GM10248 (cell line): ENCODE measurements at regions of chr6 and their contacts with region 1.

Region 1: DNA sequence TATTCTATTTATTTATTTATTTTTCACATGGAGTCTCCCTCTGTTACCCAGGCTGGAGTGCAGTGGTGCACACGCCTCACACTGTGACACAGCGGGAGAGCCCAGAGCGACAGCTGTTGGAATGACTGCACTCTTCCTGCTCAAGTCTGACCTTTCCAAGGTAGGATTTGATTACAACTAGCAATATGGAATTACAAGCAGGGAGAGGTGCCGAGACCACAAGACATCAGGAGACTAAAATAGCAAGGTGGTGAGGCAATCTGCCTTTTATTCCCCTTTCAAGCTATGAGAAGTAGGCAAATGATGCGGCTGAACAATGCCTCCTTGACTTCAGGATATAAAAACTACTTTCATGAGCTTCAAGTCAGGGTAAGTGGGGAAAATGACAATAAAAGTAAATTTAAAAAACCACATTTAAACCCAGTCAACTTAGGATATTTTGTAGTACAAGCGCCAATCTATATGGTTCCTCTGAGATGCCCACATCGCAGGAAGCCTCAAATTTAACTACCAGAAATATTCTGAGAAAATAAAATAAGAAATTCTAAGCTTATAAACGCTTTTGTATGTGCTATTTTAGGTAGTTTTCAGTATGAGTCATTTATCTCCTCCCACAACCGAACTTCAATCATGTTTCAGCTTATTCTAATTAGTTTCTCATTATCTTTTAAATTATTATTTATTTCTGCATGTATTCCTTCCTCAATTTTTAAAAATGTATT is 146.9 kb upstream of the SGK1 start:
- DNase-seq: peak; percentile 27
- CTCF ChIP-seq: no peak

Region 2: DNA sequence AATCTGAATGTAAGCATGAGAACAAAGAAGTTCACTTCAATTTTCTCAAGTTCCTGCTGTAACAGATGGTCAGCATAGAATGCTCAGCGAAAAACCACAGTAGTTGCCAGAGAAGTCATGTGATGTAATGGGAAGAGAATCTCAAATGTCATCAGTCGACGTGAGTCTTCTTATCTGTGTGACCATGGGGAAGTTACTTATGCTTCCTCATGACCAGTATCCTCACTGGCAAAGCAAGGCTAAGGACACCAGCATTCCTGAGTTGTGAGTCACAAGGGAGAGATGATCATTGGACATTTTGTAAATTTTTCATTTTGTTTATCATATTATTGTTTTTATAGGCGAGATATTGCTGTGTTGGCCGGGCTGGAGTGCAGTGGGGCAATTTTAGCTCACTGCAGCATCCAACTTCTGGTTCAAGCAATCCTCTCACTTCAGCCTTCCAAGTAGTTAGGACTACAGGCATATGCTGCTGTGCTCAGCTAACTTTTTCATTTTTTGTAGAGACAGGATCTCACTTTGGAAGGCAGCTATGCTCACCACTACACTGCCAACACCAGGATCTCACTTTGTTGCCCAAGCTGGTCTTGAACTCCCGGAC is 168.8 kb before region 1 on chr6:
- CTCF ChIA-PET with region 1: no interaction called
- POLR2A ChIA-PET with region 1: no interaction called
- DNase-seq: peak; percentile 54
- CTCF ChIP-seq: no peak

Region 3: DNA sequence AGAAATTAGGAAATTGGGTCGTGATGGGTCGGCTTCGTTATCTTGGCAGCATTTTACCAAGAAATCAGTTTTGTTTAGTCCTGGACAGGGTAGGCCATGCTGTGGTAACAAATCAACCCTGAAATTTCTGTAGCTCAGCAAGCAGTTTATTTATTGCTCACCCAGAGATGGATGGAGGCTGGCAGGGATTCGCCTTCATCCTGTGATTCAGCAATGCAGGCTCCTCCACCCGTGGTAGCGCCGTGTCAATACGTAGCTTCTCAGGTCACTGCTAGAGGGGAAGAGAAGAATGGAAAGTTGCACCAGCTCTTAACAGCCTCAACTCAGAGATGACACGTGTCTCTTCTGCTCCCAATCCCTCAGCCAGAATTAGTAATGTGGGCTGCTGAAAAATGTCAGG is 10.1 kb after region 1 on chr6:
- CTCF ChIA-PET with region 1: interaction called, 12 read pairs
- POLR2A ChIA-PET with region 1: no interaction called
- DNase-seq: no peak
- CTCF ChIP-seq: no peak